ENCODE measurements at regions of chr7 and their contacts with region 1.

Region 1: GRCh38 chr7:18489624-18490023 is 5.9 kb upstream of the HDAC9 start:
- DNase-seq: no peak
- ATAC-seq: no peak
- H3K4me3 Mint-ChIP-seq: no peak overlapping the region
- H3K27ac Mint-ChIP-seq: no peak overlapping the region
- H3K4me1 Mint-ChIP-seq: peaks cover 28% of the 10 kb centered on the region
- H3K27me3 Mint-ChIP-seq: no peaks in the 10 kb centered on the region
- CTCF ChIP-seq: no peak

Region 2: DNA sequence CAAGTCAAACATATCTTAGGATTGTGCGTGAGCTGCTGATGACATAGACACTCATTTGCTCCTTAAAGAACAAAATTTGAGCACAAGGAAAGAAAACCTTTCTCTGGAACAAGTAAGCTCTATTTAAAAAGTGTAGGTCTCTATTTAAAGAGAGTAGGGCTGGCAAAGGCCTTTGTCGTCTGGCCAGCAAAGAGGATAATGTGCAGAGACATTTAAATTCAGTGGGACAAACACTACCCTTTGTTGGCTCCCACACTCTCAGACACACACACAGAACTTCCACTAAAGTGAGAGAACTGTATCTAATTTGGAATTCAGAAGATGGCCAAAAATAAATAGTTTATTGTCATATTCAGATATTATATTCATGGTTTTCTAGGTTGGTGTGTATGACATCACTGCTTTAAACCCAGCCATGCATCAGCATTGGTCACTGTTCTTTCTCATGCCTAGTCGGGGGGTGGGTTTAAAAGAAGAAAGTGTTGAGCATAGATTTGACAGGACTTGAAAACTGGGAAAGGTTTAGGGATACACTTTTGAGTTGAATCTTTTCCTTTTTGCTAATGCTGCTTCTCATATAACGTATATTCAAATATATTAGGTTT is 43.6 kb before region 1 on chr7:
- CTCF ChIA-PET with region 1: no interaction called
- POLR2A ChIA-PET with region 1: no interaction called
- intact Hi-C with region 1: loop called (anchors 5 kb)
- DNase-seq: no peak
- ATAC-seq: no peak
- H3K4me3 Mint-ChIP-seq: no peak overlapping the region
- H3K27ac Mint-ChIP-seq: no peak overlapping the region
- H3K4me1 Mint-ChIP-seq: peaks cover 10% of the 10 kb centered on the region
- H3K27me3 Mint-ChIP-seq: no peaks in the 10 kb centered on the region
- CTCF ChIP-seq: no peak

Region 3: GRCh38 chr7:18464830-18465229 is 24.8 kb before region 1 on chr7:
- CTCF ChIA-PET with region 1: no interaction called
- POLR2A ChIA-PET with region 1: no interaction called
- intact Hi-C with region 1: no loop called
- DNase-seq: no peak
- ATAC-seq: no peak
- H3K4me3 Mint-ChIP-seq: no peak overlapping the region
- H3K27ac Mint-ChIP-seq: no peak overlapping the region
- H3K4me1 Mint-ChIP-seq: peaks cover 31% of the 10 kb centered on the region
- H3K27me3 Mint-ChIP-seq: no peaks in the 10 kb centered on the region
- CTCF ChIP-seq: no peak

Region 4: GRCh38 chr7:18475488-18475887 is 14.1 kb before region 1 on chr7:
- CTCF ChIA-PET with region 1: no interaction called
- POLR2A ChIA-PET with region 1: interaction called, 3 read pairs
- intact Hi-C with region 1: loop called (anchors 1 kb)
- DNase-seq: no peak
- ATAC-seq: no peak
- H3K4me3 Mint-ChIP-seq: no peak overlapping the region
- H3K27ac Mint-ChIP-seq: no peak overlapping the region
- H3K4me1 Mint-ChIP-seq: peaks cover 6% of the 10 kb centered on the region
- H3K27me3 Mint-ChIP-seq: no peaks in the 10 kb centered on the region
- CTCF ChIP-seq: no peak

Measured in activated B cell treated with CpG ODN at 0.5 μM for 24 hours (primary cell).